HCT116 (cell line): ENCODE measurements at regions of chr14 and their contacts with region 1.

Region 1: GRCh38 chr14:37081202-37081601 is 91.2 kb downstream of the SLC25A21 start:
- DNase-seq: peak; percentile 93
- ATAC-seq: peak; percentile 86
- H3K4me3 ChIP-seq: peak overlapping the region in 1 of 2 experiments; percentile 14; a peak in 1 of 4 replicates
- H3K27ac ChIP-seq: no peak overlapping the region
- H3K4me1 ChIP-seq: peaks cover 8 to 22% of the 10 kb centered on the region in 2 experiments; a peak in 3 of 4 replicates
- H3K27me3 ChIP-seq: no peaks in the 10 kb centered on the region
- CTCF ChIP-seq: no peak
- POLR2A ChIP-seq: no peak
- RAD21 ChIP-seq: no peak

Region 2: DNA sequence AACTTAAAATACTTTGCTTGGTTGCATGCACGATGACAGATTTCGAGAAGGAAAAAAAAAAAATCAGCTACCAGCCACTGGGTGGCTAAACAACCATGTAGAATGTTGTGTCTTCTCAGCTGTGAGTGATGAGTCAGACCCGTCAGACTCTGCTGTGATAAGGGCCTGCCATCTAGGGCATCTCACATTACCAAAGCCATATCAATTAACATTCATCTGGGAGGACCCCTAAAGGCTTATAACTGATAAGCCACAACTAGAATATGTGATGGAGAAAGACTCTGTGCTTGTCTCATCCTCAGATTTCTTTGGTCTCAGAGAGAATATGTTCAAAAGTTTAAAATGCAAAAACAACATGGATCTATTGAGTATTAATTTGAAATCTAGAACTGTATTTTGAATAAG is 308.1 kb before region 1 on chr14:
- CTCF ChIA-PET with region 1: no interaction called
- POLR2A ChIA-PET with region 1: no interaction called
- RAD21 ChIA-PET with region 1: no interaction called
- intact Hi-C with region 1: loop called (anchors 1 kb)
- DNase-seq: peak; percentile 33
- ATAC-seq: peak; percentile 93
- H3K4me3 ChIP-seq: no peak overlapping the region
- H3K27ac ChIP-seq: no peak overlapping the region
- H3K4me1 ChIP-seq: peaks cover 3 to 6% of the 10 kb centered on the region in 2 experiments; a peak in 2 of 4 replicates
- H3K27me3 ChIP-seq: no peaks in the 10 kb centered on the region
- CTCF ChIP-seq: peak; percentile 19 to 59 (median 43); a peak in 4 of 6 replicates
- POLR2A ChIP-seq: no peak
- RAD21 ChIP-seq: peak; percentile 43

Region 3: DNA sequence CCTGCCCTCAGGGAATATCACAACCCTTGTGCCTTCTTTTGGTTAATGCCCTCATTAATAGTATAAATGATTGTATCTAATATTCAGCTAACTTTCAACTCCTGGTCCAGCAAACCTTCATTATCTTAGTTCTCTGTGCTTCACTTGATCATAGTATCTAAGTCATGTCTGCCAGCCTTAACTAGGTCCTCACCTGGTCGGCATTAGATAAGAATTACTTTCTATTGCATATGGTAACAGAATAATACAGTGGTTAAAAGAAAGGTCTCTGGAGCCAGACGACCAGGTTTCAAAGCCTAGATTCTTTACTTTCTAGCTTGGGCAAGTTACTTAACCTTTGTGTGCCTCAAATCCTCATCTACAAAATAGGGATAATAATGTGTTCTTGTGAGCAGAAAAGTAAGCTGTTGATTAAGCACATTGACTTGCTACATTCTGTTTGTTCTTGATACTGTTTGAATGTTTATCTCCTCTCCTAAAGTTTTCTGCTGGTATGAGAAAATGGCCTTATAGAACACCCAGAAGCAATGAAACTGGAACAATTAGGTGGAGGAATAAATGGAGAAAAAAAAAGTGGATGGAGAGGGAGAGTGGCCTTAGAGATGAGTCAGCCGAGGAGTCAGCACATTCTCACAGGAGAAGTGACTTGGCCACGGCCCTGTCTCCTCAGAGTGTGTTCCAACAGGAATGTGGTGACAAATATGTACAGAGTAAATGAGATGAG is 84.9 kb before region 1 on chr14:
- CTCF ChIA-PET with region 1: no interaction called
- POLR2A ChIA-PET with region 1: no interaction called
- RAD21 ChIA-PET with region 1: no interaction called
- intact Hi-C with region 1: no loop called
- DNase-seq: no peak
- ATAC-seq: peak; percentile 86
- H3K4me3 ChIP-seq: no peak overlapping the region
- H3K27ac ChIP-seq: peak overlapping the region; percentile 16; the same call in 1 of the 2 replicates
- H3K4me1 ChIP-seq: peaks cover 7 to 18% of the 10 kb centered on the region in 2 experiments
- H3K27me3 ChIP-seq: no peaks in the 10 kb centered on the region
- CTCF ChIP-seq: no peak
- POLR2A ChIP-seq: no peak
- RAD21 ChIP-seq: no peak

Region 4: GRCh38 chr14:37034410-37035285 is 46.6 kb before region 1 on chr14:
- CTCF ChIA-PET with region 1: no interaction called
- POLR2A ChIA-PET with region 1: no interaction called
- RAD21 ChIA-PET with region 1: no interaction called
- intact Hi-C with region 1: no loop called
- DNase-seq: no peak
- ATAC-seq: no peak
- H3K4me3 ChIP-seq: no peak overlapping the region
- H3K27ac ChIP-seq: no peak overlapping the region
- H3K4me1 ChIP-seq: peaks cover 0 to 5% of the 10 kb centered on the region in 2 experiments; a peak in 1 of 4 replicates
- H3K27me3 ChIP-seq: no peaks in the 10 kb centered on the region
- CTCF ChIP-seq: no peak
- POLR2A ChIP-seq: no peak
- RAD21 ChIP-seq: no peak

Region 5: GRCh38 chr14:37048666-37049071 is 32.5 kb before region 1 on chr14:
- CTCF ChIA-PET with region 1: no interaction called
- POLR2A ChIA-PET with region 1: no interaction called
- RAD21 ChIA-PET with region 1: no interaction called
- intact Hi-C with region 1: no loop called
- DNase-seq: no peak
- ATAC-seq: no peak
- H3K4me3 ChIP-seq: no peak overlapping the region
- H3K27ac ChIP-seq: no peak overlapping the region
- H3K4me1 ChIP-seq: peaks cover 0 to 12% of the 10 kb centered on the region in 2 experiments; a peak in 2 of 4 replicates
- H3K27me3 ChIP-seq: no peaks in the 10 kb centered on the region
- CTCF ChIP-seq: no peak
- POLR2A ChIP-seq: no peak
- RAD21 ChIP-seq: no peak

Region 6: DNA sequence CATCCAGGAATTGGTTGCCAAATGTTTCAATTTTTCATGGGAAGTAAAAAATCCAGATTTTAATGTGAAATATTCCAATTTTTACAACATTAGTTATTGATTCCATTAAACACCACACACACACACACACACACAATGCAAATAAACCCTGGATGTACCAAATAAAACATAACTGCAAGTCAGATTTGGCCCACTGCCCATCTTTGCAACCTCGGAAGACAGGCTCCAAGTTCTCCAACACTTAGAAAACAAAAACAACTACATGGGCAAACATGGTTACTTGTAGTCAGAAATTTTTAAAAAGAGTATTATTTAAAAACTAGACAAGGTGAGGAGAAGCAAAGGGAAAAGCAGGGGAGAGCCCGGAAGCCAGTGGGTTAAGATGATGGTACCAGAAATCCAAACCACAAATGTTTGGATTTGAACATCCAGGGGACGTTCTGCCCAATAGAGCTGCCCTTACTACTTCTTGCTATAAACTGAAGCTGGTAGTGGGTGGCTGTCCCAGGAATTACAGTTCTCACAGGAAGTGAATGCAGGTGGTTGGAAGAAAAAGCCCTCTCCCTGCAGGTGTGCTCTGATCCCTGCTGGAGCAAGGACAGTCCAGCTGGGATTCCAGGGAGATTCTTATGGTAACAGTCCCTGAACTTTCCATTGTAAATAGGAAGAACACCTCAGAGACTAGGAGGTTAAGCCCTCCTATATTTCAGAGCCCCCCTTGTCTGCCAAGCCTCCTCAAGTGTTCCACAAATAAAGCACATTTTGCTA is 20.5 kb before region 1 on chr14:
- CTCF ChIA-PET with region 1: no interaction called
- POLR2A ChIA-PET with region 1: no interaction called
- RAD21 ChIA-PET with region 1: no interaction called
- intact Hi-C with region 1: no loop called
- DNase-seq: no peak
- ATAC-seq: no peak
- H3K4me3 ChIP-seq: no peak overlapping the region
- H3K27ac ChIP-seq: no peak overlapping the region
- H3K4me1 ChIP-seq: 0 out of 4 replicates have a peak, but pooled peaks cover 0 to 4% of the 10 kb centered on the region in 2 experiments
- H3K27me3 ChIP-seq: no peaks in the 10 kb centered on the region
- CTCF ChIP-seq: no peak
- POLR2A ChIP-seq: no peak
- RAD21 ChIP-seq: no peak